CD8-positive, alpha-beta T cell (primary cell): ENCODE measurements at regions of chr14 and their contacts with region 1.

Region 1: GRCh38 chr14:98210045-98210672 is 1061.8 kb downstream of the BCL11B start:
- DNase-seq: peak; percentile 25 to 87 (median 75)
- ATAC-seq: peak; percentile 72
- H3K4me3 ChIP-seq: peak overlapping the region; percentile 7 to 20
- H3K4me3 Mint-ChIP-seq: peak overlapping the region; percentile 68
- H3K27ac ChIP-seq: peak overlapping the region; percentile 44 to 68
- H3K27ac Mint-ChIP-seq: peak overlapping the region; percentile 92
- H3K4me1 ChIP-seq: peaks cover 83% of the 10 kb centered on the region
- H3K4me1 Mint-ChIP-seq: peaks cover 97% of the 10 kb centered on the region
- H3K27me3 ChIP-seq: no peaks in the 10 kb centered on the region
- H3K27me3 Mint-ChIP-seq: no peaks in the 10 kb centered on the region
- CTCF ChIP-seq: no peak

Region 2: DNA sequence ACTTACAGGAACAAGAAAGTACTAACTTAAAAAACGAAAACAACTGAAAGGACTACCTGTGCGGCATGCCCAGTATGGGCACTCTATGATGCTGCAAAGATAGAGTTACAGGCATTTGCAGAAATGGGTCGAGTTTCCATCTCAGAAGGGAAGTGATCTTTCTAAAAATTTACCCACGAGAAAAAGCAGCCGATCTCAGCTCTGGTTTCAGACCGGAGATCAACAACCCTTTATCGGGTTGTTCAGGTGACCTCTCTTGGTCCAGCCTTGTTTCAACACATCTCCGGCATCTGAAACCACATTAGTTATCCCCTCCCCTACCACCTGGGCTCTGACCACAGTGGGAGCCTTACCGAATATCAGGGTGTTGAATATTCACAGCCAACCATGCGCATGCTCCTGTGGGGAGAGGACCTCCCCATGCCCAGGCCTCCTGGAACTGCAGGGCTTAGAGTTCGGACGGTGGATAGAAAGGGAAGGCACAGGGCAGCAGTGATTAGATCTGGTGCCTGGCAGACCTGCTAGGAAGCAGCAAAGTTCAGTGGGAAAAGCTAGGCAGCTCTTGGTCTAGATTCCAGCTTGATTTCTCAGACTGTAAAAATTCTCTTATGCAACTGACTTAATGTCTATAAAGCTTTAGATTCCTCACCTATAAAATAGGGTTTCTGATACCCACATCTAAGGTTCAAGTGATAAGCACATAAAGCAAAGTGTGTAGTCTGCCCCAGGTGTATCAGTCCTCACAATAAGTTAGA is 507.0 kb before region 1 on chr14:
- CTCF ChIA-PET with region 1: no interaction called
- POLR2A ChIA-PET with region 1: no interaction called
- intact Hi-C with region 1: no loop called
- DNase-seq: peak in 4 of 9 experiments; percentile 49 to 66 (median 59)
- ATAC-seq: peak; percentile 57
- H3K4me3 ChIP-seq: peak overlapping the region in 1 of 2 experiments; percentile 10
- H3K4me3 Mint-ChIP-seq: peak overlapping the region; percentile 53
- H3K27ac ChIP-seq: peak overlapping the region; percentile 26 to 63
- H3K27ac Mint-ChIP-seq: peak overlapping the region; percentile 89
- H3K4me1 ChIP-seq: peaks cover 67% of the 10 kb centered on the region
- H3K4me1 Mint-ChIP-seq: peaks cover 74% of the 10 kb centered on the region
- H3K27me3 ChIP-seq: no peaks in the 10 kb centered on the region
- H3K27me3 Mint-ChIP-seq: no peaks in the 10 kb centered on the region
- CTCF ChIP-seq: no peak

Region 3: DNA sequence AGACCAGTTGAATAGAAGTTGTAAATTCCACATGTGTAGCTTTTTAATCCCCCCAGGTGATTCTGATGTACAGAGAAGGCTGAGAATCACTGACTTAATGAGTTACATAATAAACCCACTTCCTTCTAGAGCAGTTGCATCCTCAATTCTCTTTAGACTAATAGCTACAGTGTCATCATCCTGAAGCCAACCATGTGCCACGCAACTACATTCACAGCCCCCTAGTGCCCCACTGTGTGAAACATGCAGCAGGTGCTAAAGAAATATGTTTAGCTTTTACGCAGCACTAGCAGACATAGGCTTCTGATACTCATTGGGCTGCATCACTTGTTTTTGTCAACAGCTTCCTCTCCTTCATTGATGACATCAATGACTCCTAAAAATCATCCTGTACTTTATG is 106.5 kb before region 1 on chr14:
- CTCF ChIA-PET with region 1: no interaction called
- POLR2A ChIA-PET with region 1: no interaction called
- intact Hi-C with region 1: no loop called
- DNase-seq: peak; percentile 5 to 86 (median 42)
- ATAC-seq: peak; percentile 95
- H3K4me3 ChIP-seq: no peak overlapping the region
- H3K4me3 Mint-ChIP-seq: no peak overlapping the region
- H3K27ac ChIP-seq: no peak overlapping the region
- H3K27ac Mint-ChIP-seq: peak overlapping the region; percentile 83
- H3K4me1 ChIP-seq: peaks cover 22% of the 10 kb centered on the region
- H3K4me1 Mint-ChIP-seq: peaks cover 39% of the 10 kb centered on the region
- H3K27me3 ChIP-seq: no peaks in the 10 kb centered on the region
- H3K27me3 Mint-ChIP-seq: no peaks in the 10 kb centered on the region
- CTCF ChIP-seq: no peak

Region 4: DNA sequence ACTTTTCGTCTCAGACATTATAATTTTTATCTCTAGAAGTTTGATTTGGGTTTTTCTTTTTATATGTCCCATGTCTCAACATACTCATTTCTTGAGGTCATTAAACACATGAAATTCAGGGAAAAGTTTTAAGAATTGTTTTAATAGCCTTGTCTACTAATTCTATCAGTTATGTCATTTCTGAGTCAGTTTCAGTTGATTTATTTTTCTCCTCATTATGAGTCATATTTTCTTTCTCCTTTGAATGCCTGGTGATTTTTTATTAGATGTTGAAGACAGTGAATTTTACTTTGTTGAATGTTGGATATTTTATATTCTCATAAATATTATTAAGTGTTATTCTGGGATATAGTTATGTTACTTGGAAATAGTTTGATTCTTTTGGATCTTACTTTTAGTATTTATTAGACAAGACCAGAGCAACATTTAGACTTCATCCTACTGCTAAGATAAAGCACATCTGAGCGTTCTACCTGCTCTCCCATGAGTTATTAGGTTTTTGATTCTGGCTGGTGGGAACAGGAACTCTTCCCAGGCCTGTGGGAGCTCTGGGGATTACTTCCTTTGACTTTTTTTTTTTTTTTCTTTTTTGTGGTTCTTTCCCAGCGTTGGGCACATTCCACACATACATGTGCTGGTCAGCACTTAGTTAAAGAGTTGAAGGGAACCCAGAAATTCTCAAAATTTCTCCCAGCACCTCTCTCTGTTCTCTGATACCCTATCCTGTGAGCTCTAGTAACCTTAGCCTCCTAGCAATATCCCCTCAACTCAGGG is 95.8 kb before region 1 on chr14:
- CTCF ChIA-PET with region 1: no interaction called
- POLR2A ChIA-PET with region 1: no interaction called
- intact Hi-C with region 1: no loop called
- DNase-seq: no peak
- ATAC-seq: no peak
- H3K4me3 ChIP-seq: no peak overlapping the region
- H3K4me3 Mint-ChIP-seq: no peak overlapping the region
- H3K27ac ChIP-seq: no peak overlapping the region
- H3K27ac Mint-ChIP-seq: no peak overlapping the region
- H3K4me1 ChIP-seq: no peaks in the 10 kb centered on the region
- H3K4me1 Mint-ChIP-seq: peaks cover 5% of the 10 kb centered on the region
- H3K27me3 ChIP-seq: no peaks in the 10 kb centered on the region
- H3K27me3 Mint-ChIP-seq: no peaks in the 10 kb centered on the region
- CTCF ChIP-seq: no peak

Region 5: GRCh38 chr14:98244162-98244948 is 34.2 kb after region 1 on chr14:
- CTCF ChIA-PET with region 1: no interaction called
- POLR2A ChIA-PET with region 1: interaction called, 4 read pairs
- intact Hi-C with region 1: loop called in 1 of 2 experiments (anchors 5 kb)
- DNase-seq: no peak
- ATAC-seq: no peak
- H3K4me3 ChIP-seq: no peak overlapping the region
- H3K4me3 Mint-ChIP-seq: no peak overlapping the region
- H3K27ac ChIP-seq: no peak overlapping the region
- H3K27ac Mint-ChIP-seq: no peak overlapping the region
- H3K4me1 ChIP-seq: peaks cover 10% of the 10 kb centered on the region
- H3K4me1 Mint-ChIP-seq: peaks cover 15% of the 10 kb centered on the region
- H3K27me3 ChIP-seq: no peaks in the 10 kb centered on the region
- H3K27me3 Mint-ChIP-seq: no peaks in the 10 kb centered on the region
- CTCF ChIP-seq: no peak

Region 6: GRCh38 chr14:98853063-98853729 is 643.0 kb after region 1 on chr14:
- CTCF ChIA-PET with region 1: no interaction called
- POLR2A ChIA-PET with region 1: no interaction called
- intact Hi-C with region 1: no loop called
- DNase-seq: no peak
- ATAC-seq: no peak
- H3K4me3 ChIP-seq: no peak overlapping the region
- H3K4me3 Mint-ChIP-seq: no peak overlapping the region
- H3K27ac ChIP-seq: no peak overlapping the region
- H3K27ac Mint-ChIP-seq: no peak overlapping the region
- H3K4me1 ChIP-seq: no peaks in the 10 kb centered on the region
- H3K4me1 Mint-ChIP-seq: no peaks in the 10 kb centered on the region
- H3K27me3 ChIP-seq: no peaks in the 10 kb centered on the region
- H3K27me3 Mint-ChIP-seq: no peaks in the 10 kb centered on the region
- CTCF ChIP-seq: no peak